Activated naive CD4-positive, alpha-beta T cell treated with anti-CD3 and anti-CD28 coated beads, Interleukin-2, amount 10 ng/mL, durations not matched to agents 7 days and 5 days (primary cell): ENCODE measurements at regions of chr17 and their contacts with region 1.

Region 1: DNA sequence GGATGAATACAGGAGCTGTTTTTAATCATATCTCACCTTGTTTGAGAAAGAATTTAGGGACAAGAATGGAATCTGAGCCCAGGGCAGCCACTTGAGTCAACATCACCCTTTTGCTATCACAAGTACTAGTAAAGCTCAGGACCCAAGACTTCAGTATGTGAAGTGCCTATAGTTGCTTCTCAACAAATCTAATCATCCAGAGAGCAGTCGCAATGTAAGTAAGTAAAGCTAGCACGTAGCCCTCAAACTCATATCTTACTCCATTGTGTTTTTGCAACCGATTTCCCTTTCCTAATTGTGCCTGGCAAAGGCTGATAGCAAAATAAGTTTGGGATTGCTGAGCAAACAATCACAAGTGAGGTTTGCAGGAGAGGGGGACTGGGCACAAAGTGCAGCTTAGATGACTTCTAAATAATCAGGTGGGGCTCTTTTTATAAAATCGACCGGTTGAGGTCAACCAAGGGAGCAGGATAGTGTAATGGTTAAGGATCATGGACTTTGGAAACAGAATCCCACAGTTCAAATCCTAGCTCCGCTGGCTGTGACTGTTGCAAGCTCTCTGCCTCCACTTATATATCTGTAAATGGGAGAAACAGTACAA is 13.0 kb downstream of the TOB1 start:
- DNase-seq: no peak
- H3K4me3 Mint-ChIP-seq: peak overlapping the region; percentile 42
- H3K27ac Mint-ChIP-seq: no peak overlapping the region
- H3K4me1 Mint-ChIP-seq: peaks cover 25% of the 10 kb centered on the region
- H3K27me3 Mint-ChIP-seq: peaks cover 24% of the 10 kb centered on the region

Region 2: DNA sequence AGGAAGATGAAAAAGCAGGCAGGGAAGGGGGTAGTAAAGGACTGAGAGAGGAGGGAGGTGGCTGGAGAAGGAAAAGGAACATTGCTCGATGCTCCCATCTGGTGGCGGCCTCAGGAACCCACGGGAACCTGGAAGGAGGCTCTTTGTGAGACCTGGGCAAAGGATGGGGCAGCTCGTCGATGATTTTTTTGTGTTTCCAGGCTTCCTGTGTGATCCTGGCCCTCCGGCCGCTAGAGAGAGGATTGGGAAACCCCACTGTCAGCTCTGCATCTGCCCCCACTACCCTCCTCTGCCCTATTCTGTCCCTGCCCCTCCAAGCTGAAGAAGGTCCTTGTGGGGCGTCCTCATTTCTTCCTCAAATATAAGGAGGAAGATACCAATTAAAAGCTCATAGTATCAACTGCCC is 11.2 kb before region 1 on chr17:
- CTCF ChIA-PET with region 1: interaction called, 16 read pairs
- DNase-seq: peak; percentile 74
- H3K4me3 Mint-ChIP-seq: no peak overlapping the region
- H3K27ac Mint-ChIP-seq: no peak overlapping the region
- H3K4me1 Mint-ChIP-seq: no peaks in the 10 kb centered on the region
- H3K27me3 Mint-ChIP-seq: peaks cover 24% of the 10 kb centered on the region

Region 3: GRCh38 chr17:50944054-50944901 is 91.2 kb after region 1 on chr17:
- CTCF ChIA-PET with region 1: interaction called, 72 read pairs
- DNase-seq: peak; percentile 92
- H3K4me3 Mint-ChIP-seq: peak overlapping the region; percentile 83
- H3K27ac Mint-ChIP-seq: peak overlapping the region; percentile 90
- H3K4me1 Mint-ChIP-seq: peaks cover 50% of the 10 kb centered on the region
- H3K27me3 Mint-ChIP-seq: no peaks in the 10 kb centered on the region

Region 4: DNA sequence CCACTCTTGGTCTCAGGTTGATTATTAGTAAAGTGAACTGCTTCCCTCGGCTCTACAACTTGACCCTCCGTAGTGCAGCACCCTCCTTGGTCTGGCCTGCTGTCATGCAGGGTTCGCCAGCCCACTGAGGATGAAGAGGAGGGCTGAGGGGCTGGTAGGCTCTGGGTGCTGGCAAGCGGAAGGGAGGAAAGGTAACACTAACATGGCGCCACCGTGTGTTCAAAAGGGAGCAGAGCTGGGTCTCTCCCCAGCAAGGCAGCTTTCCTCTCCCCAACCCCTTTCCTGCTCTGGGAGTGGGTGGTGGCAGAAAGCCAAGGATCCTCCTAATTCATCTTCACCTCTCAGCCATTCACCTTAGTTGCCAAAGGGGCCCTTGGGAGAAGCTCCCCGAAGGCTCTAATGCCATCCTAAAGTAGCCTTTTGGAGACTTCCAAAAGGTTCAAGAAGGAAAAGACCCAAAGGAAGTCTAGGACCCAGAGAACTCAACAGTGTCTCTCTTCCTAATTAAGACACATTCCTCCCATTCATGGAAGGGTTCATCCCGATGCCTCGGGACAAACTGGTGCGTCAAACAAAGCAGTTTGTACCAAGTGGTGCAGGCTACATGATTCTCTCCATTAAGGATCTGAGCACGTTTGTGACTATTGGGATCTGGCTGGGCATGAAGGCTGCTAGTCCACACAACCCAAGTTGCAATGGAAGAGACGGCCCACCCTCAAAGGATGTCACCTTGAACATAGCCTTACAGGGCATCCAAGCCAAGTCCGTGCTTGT is 103.8 kb after region 1 on chr17:
- CTCF ChIA-PET with region 1: interaction called, 173 read pairs
- DNase-seq: peak; percentile 82
- H3K4me3 Mint-ChIP-seq: no peak overlapping the region
- H3K27ac Mint-ChIP-seq: no peak overlapping the region
- H3K4me1 Mint-ChIP-seq: peaks cover 20% of the 10 kb centered on the region
- H3K27me3 Mint-ChIP-seq: peaks cover 29% of the 10 kb centered on the region

Region 5: GRCh38 chr17:51000835-51001638 is 147.9 kb after region 1 on chr17:
- CTCF ChIA-PET with region 1: interaction called, 20 read pairs
- DNase-seq: peak; percentile 27
- H3K4me3 Mint-ChIP-seq: no peak overlapping the region
- H3K27ac Mint-ChIP-seq: no peak overlapping the region
- H3K4me1 Mint-ChIP-seq: no peaks in the 10 kb centered on the region
- H3K27me3 Mint-ChIP-seq: no peaks in the 10 kb centered on the region